ENCODE measurements at regions of chr12 and their contacts with region 1.

Region 1: GRCh38 chr12:108633534-108634248 is at the start of gene SELPLG:
- DNase-seq: peak; percentile 91 to 97 (median 94)
- H3K4me3 ChIP-seq: peak within 1 kb of the TSS; percentile 92 to 95
- H3K4me3 Mint-ChIP-seq: peak within 1 kb of the TSS; percentile 94 to 100 (median 99)
- H3K27ac ChIP-seq: peak within 1 kb of the TSS; percentile 92
- H3K27ac Mint-ChIP-seq: peak within 1 kb of the TSS; percentile 99 to 100 (median 100)
- H3K4me1 ChIP-seq: peaks cover 65% of the 10 kb centered on the region
- H3K4me1 Mint-ChIP-seq: peaks cover 40 to 84% (median 54%) of the 10 kb centered on the region in 4 donors
- H3K27me3 ChIP-seq: no peaks in the 10 kb centered on the region
- H3K27me3 Mint-ChIP-seq: no peaks in the 10 kb centered on the region
- total RNA-seq, gene SELPLG: 175 to 176 TPM

Region 2: GRCh38 chr12:108156717-108157116 is 477.0 kb before region 1 on chr12:
- CTCF ChIA-PET with region 1: no interaction called
- POLR2A ChIA-PET with region 1: no interaction called
- intact Hi-C with region 1: no loop called
- DNase-seq: no peak
- H3K4me3 ChIP-seq: no peak overlapping the region
- H3K4me3 Mint-ChIP-seq: no peak overlapping the region
- H3K27ac ChIP-seq: no peak overlapping the region
- H3K27ac Mint-ChIP-seq: no peak overlapping the region
- H3K4me1 ChIP-seq: no peaks in the 10 kb centered on the region
- H3K4me1 Mint-ChIP-seq: no peaks in the 10 kb centered on the region
- H3K27me3 ChIP-seq: no peaks in the 10 kb centered on the region
- H3K27me3 Mint-ChIP-seq: peaks cover 5 to 16% of the 10 kb centered on the region in 2 donors

Region 3: GRCh38 chr12:108570743-108571608 is 62.7 kb before region 1 on chr12:
- CTCF ChIA-PET with region 1: interaction called, 50 read pairs
- POLR2A ChIA-PET with region 1: interaction called, 245 read pairs
- intact Hi-C with region 1: no loop called
- DNase-seq: peak in 3 of 5 donors; percentile 9 to 20 (median 14)
- H3K4me3 ChIP-seq: no peak overlapping the region
- H3K4me3 Mint-ChIP-seq: peak overlapping the region in 1 of 8 donors; percentile 17
- H3K27ac ChIP-seq: peak overlapping the region; percentile 33
- H3K27ac Mint-ChIP-seq: peak overlapping the region; percentile 64 to 98 (median 88)
- H3K4me1 ChIP-seq: peaks cover 84% of the 10 kb centered on the region
- H3K4me1 Mint-ChIP-seq: peaks cover 44 to 88% (median 69%) of the 10 kb centered on the region in 4 donors
- H3K27me3 ChIP-seq: no peaks in the 10 kb centered on the region
- H3K27me3 Mint-ChIP-seq: no peaks in the 10 kb centered on the region

Region 4: GRCh38 chr12:108643941-108644810 is 10.5 kb after region 1 on chr12:
- CTCF ChIA-PET with region 1: interaction called, 61 read pairs
- POLR2A ChIA-PET with region 1: interaction called, 69 read pairs
- intact Hi-C with region 1: loop called (anchors 1 kb)
- DNase-seq: no peak
- H3K4me3 ChIP-seq: no peak overlapping the region
- H3K4me3 Mint-ChIP-seq: no peak overlapping the region
- H3K27ac ChIP-seq: no peak overlapping the region
- H3K27ac Mint-ChIP-seq: peak overlapping the region in 2 of 7 donors; percentile 32 to 46
- H3K4me1 ChIP-seq: peaks cover 14% of the 10 kb centered on the region
- H3K4me1 Mint-ChIP-seq: peaks cover 18 to 44% (median 25%) of the 10 kb centered on the region in 4 donors
- H3K27me3 ChIP-seq: no peaks in the 10 kb centered on the region
- H3K27me3 Mint-ChIP-seq: no peaks in the 10 kb centered on the region

Region 5: DNA sequence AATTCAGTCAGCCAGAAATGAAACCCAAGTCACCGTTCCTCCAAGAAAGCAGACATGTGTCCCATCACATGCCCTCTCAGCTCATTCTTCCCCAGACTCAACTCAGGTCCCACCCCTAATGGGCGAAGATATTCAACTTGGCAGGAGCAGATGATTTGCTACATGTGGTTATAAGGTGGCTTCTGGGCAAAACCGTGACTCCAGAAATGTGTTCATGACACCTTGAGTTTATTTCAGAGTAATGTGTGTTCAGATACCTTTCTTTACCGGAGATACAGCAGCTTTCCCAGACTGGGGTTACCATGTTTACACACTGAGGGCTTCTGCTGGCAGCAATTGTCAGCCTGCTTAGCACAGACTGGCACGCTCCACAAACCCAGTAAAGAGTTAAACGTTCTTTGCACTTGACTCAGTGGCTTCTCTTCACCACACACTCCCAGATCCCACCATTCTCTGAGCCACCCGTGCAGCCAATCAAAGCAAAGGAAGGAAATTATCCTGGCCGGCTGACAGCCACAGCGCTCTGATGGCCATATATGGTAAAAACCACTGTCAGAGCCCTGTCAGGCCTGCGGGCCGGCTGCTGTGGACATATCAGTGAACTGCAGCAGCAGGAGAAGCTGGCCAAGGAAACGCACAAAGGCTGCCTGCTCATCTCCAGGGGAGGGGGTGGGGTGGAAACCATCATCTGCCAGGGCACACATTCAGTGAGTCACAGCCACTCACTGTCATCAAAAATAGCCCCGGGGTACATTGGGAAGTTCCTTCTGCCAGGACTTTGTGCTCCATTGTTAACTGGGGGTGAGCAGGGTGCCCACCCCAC is 57.7 kb after region 1 on chr12:
- CTCF ChIA-PET with region 1: interaction called, 10 read pairs
- POLR2A ChIA-PET with region 1: interaction called, 7 read pairs
- intact Hi-C with region 1: no loop called
- DNase-seq: peak; percentile 33 to 83 (median 38)
- H3K4me3 ChIP-seq: peak overlapping the region in 1 of 2 donors; percentile 56
- H3K4me3 Mint-ChIP-seq: peak overlapping the region; percentile 48 to 85 (median 78)
- H3K27ac ChIP-seq: peak overlapping the region; percentile 27
- H3K27ac Mint-ChIP-seq: peak overlapping the region; percentile 77 to 90 (median 86)
- H3K4me1 ChIP-seq: peaks cover 46% of the 10 kb centered on the region
- H3K4me1 Mint-ChIP-seq: peaks cover 37 to 66% (median 54%) of the 10 kb centered on the region in 4 donors
- H3K27me3 ChIP-seq: no peaks in the 10 kb centered on the region
- H3K27me3 Mint-ChIP-seq: no peaks in the 10 kb centered on the region

Region 6: GRCh38 chr12:108731105-108731865 is 97.6 kb after region 1 on chr12 and contains the start of gene CORO1C:
- CTCF ChIA-PET with region 1: interaction called, 5 read pairs
- POLR2A ChIA-PET with region 1: interaction called, 5 read pairs
- intact Hi-C with region 1: loop called (anchors 1 kb)
- DNase-seq: peak; percentile 94 to 97 (median 95)
- H3K4me3 ChIP-seq: peak within 1 kb of the TSS; percentile 88 to 91
- H3K4me3 Mint-ChIP-seq: peak within 1 kb of the TSS; percentile 89 to 97 (median 95)
- H3K27ac ChIP-seq: peak within 1 kb of the TSS; percentile 69
- H3K27ac Mint-ChIP-seq: peak within 1 kb of the TSS; percentile 92 to 99 (median 98)
- H3K4me1 ChIP-seq: peaks cover 5% of the 10 kb centered on the region
- H3K4me1 Mint-ChIP-seq: peaks cover 11 to 28% (median 26%) of the 10 kb centered on the region in 4 donors
- H3K27me3 ChIP-seq: no peaks in the 10 kb centered on the region
- H3K27me3 Mint-ChIP-seq: no peaks in the 10 kb centered on the region
- total RNA-seq, gene CORO1C: 10.3 to 11.9 TPM

Region 7: DNA sequence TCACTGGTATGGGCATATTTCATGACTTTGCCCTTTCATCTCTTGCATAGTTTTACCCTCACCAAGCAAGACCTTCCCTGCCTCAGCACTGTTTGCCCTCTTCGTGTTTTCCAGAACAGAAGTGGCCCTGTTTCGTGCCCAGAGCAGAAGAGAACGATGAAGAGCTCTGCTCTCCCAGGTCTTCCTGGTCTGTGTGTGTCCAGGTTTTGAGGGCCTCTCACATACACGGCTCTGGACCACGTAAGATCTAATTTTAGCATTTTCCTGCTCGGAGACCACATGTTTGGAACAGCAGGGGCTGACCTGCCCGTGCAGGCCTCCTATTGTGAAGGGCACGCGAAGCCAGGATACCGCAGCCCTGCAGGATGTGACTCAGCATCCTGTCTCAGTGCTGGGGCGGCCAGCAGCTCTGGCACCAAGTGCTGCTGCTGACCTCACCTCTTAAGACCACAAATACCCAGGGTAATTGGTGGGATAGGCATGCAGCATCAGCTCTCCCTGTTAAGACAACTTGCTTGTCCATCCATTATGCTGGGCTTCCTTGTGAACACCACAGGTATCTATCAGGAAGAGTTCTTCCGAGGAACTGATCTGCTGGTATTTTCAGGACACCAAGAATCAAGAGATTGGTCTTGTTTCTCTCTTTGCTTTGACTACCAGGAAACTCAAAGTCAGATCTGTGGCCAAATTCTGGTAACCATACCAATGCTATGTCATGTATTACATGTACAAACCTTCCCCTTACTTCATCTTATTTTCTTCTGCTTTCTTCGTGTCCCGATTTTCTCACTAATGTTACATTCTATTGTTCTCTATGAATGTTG is 204.7 kb after region 1 on chr12:
- CTCF ChIA-PET with region 1: interaction called, 3 read pairs
- POLR2A ChIA-PET with region 1: interaction called, 13 read pairs
- intact Hi-C with region 1: no loop called
- DNase-seq: peak; percentile 26 to 78 (median 38)
- H3K4me3 ChIP-seq: no peak overlapping the region
- H3K4me3 Mint-ChIP-seq: peak overlapping the region in 7 of 8 donors; percentile 67 to 89 (median 78)
- H3K27ac ChIP-seq: peak overlapping the region; percentile 42
- H3K27ac Mint-ChIP-seq: peak overlapping the region; percentile 61 to 96 (median 90)
- H3K4me1 ChIP-seq: peaks cover 31% of the 10 kb centered on the region
- H3K4me1 Mint-ChIP-seq: peaks cover 20 to 46% (median 33%) of the 10 kb centered on the region in 4 donors
- H3K27me3 ChIP-seq: no peaks in the 10 kb centered on the region
- H3K27me3 Mint-ChIP-seq: no peaks in the 10 kb centered on the region